ENCODE measurements at regions of chr14 and their contacts with region 1.

Region 1: DNA sequence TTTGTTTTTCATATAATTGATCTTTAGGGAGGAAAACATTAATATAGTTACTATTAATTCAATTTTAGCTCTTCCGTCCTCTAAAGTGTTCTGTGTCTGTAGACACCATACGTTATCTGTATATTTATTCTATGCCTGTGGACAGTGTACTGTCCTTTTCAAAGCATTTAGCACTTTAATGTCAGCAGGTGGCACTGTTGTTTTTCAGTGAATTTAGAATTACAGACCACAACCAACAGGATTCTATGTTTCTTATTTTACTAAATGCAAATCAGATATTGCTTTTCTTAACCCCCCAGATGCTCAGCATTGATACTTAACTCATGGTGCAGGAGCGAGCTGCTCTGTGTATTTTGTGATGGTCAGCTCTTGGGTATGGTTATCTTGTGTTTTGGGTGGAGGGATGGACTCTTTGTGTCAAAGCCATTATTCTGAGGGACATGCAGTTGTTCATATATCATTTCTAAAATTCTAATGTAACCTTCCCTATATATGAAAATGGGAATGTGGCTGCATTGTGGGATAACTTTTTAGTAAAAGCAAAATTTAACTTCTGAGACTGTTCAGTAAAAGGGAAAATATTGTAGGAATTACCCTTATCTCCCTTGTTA is 65.2 kb downstream of the PAPOLA start:
- DNase-seq: no peak
- ATAC-seq: peak; percentile 57

Region 2: DNA sequence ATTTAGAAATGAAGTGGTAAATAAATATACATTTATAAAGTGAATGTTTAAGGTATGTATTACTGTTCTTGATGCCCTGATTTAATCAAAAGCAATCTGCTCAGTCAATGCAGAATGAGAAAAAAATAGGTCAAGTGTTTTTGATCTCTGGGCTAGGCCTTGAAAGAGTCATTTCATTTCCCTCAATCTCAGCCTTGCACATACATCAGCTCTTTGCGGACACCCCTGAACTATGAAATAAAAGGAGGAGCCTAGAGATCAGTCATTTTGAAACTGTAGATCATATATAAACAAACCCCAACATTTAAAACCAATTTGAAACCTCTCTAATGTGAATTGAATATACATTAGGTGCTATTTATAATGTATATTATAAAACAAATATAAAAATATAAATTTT is 246.8 kb before region 1 on chr14:
- intact Hi-C with region 1: loop called (anchors 10 kb)
- DNase-seq: no peak
- ATAC-seq: no peak

Region 3: DNA sequence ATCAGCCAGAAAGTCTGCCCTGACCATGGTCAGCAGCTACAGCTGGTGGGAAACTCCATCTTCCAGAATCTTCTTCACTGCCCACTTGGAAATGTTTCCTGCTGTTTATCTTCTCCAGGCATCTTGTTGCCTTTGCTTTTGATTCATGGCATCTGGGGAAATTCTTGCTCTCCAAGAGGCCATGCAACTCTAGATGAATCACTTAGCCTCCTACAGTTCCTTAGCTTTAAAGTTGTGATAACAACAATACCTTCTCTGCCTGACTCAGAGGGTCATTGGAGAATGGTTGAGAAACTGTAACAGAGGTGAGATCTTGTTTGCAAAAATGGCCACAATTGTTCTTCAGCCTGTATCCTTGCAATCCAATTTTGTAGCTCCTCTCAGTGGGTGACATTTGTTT is 108.8 kb after region 1 on chr14:
- intact Hi-C with region 1: no loop called
- DNase-seq: no peak
- ATAC-seq: no peak

Region 4: DNA sequence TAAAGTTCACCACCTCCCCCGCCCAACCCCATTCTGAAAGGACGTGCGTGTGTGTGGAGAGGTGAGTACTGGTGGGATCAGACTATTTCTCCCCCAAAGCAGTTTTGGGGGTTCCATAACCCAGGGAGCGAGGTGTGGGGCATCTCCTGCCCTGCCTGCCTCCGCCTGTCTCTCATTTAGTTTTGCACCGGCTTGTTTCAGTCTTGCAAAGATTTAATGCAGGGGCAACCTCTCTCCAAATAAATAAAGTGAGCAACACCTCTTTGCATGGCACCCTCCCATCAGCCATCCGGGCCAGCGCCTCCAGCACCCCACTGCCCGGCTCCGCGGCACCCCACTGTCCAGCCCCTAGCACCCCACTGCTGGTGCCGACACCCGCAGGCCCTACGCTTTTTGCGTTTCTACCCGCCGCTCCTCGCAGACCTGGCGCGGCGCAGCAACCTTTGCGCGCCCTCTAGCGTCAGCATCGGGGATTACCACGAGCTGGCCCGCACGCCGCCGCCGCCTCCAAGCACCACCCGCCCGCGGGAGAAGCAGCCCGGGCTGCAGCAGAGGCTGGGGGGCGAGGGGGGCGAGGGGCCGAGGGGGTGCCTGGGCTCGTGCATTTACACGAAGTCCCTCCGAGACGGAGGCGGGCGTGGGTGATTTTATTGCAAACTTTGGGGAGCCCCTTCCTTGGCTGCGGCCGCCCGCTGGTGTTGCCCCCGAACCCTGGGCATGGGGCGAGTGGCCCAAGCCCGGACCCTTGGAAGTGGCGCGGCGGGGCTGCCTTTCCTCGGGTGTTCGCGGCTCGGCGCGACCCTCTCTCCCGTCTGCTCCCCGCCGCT is 174.0 kb after region 1 on chr14:
- intact Hi-C with region 1: loop called (anchors 5 kb)
- DNase-seq: peak; percentile 76
- ATAC-seq: peak; percentile 96

Region 5: DNA sequence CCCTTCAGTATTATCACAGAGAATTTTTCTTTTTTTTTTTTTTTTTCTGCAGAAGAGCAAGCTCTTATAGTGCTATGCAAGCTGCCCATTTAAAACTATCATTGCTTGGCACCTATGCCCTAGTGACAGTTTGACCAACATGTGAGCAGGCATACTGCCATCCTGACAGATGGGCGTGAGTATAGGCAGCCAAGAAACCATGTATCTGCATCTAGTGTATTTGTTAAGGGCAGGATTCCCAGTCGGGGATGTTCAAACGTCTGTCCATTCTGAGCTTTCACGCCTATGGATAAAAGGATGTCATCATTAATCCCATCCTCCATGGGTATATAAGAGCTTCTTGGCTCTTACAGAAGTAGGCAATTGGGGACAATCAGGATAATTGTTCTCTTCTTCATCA is 238.6 kb after region 1 on chr14:
- intact Hi-C with region 1: no loop called
- DNase-seq: no peak
- ATAC-seq: peak; percentile 84